MCF 10A (cell line): ENCODE measurements at regions of chr11 and their contacts with region 1.

Region 1: GRCh38 chr11:130069684-130070108 is at the start of gene APLP2:
- DNase-seq: peak; percentile 99
- H3K4me3 Mint-ChIP-seq: peak within 1 kb of the TSS; percentile 85
- H3K27ac Mint-ChIP-seq: peak within 1 kb of the TSS; percentile 92
- H3K4me1 Mint-ChIP-seq: peaks cover 25% of the 10 kb centered on the region
- H3K27me3 Mint-ChIP-seq: no peaks in the 10 kb centered on the region
- CTCF ChIP-seq: no peak
- total RNA-seq, gene APLP2: 317 and 368 TPM in 2 replicates

Region 2: DNA sequence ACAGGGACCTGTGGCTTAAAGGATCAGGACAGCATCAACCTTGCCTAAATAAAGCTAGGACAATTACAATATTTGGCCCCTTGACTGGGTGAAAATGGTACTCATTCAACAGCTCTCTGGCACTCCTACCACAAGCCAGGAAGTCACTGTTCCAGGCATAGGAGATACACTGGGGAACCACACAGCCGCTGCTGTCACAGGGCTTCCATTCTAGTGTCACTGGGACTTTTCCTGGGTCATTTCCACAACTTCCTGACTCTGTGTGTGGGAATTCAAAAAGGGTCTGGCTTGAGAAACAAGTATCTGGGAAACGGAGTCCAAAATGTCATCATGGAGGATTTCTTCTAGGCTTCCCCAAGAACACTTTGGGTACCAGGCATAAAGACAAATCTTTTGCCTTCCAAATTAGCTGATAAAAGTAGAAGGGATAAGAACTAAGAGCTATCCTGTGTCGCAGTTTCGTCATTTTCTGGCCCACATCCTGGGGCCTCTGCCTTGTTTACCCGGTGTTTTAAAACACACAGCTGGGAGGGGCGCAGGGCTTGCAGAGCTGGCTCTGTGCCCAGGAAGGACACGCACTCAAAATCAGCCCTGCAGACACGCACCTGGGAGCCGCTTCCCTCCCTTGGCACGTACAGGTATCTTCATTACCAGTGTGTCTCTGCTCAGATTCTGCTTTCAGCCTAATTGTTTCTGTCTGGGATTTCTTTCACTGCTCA is 216.0 kb before region 1 on chr11:
- CTCF ChIA-PET with region 1: no interaction called
- POLR2A ChIA-PET with region 1: no interaction called
- intact Hi-C with region 1: no loop called
- DNase-seq: peak; percentile 91
- H3K4me3 Mint-ChIP-seq: peak overlapping the region; percentile 2
- H3K27ac Mint-ChIP-seq: peak overlapping the region; percentile 80
- H3K4me1 Mint-ChIP-seq: peaks cover 37% of the 10 kb centered on the region
- H3K27me3 Mint-ChIP-seq: no peaks in the 10 kb centered on the region
- CTCF ChIP-seq: no peak

Region 3: GRCh38 chr11:129922674-129923073 is 147.0 kb before region 1 on chr11:
- CTCF ChIA-PET with region 1: interaction called, 3 read pairs
- POLR2A ChIA-PET with region 1: interaction called, 5 read pairs
- intact Hi-C with region 1: loop called (anchors 2 kb)
- DNase-seq: no peak
- H3K4me3 Mint-ChIP-seq: no peak overlapping the region
- H3K27ac Mint-ChIP-seq: no peak overlapping the region
- H3K4me1 Mint-ChIP-seq: peaks cover 5% of the 10 kb centered on the region
- H3K27me3 Mint-ChIP-seq: no peaks in the 10 kb centered on the region
- CTCF ChIP-seq: no peak

Region 4: GRCh38 chr11:130031945-130032344 is 37.8 kb before region 1 on chr11:
- CTCF ChIA-PET with region 1: no interaction called
- POLR2A ChIA-PET with region 1: interaction called, 28 read pairs
- intact Hi-C with region 1: loop called (anchors 1 kb)
- DNase-seq: no peak
- H3K4me3 Mint-ChIP-seq: no peak overlapping the region
- H3K27ac Mint-ChIP-seq: peak overlapping the region; percentile 51
- H3K4me1 Mint-ChIP-seq: peaks cover 11% of the 10 kb centered on the region
- H3K27me3 Mint-ChIP-seq: no peaks in the 10 kb centered on the region
- CTCF ChIP-seq: no peak

Region 5: GRCh38 chr11:130055617-130056016 is 14.1 kb before region 1 on chr11:
- CTCF ChIA-PET with region 1: interaction called, 4 read pairs
- POLR2A ChIA-PET with region 1: interaction called, 25 read pairs
- intact Hi-C with region 1: no loop called
- DNase-seq: peak; percentile 57
- H3K4me3 Mint-ChIP-seq: no peak overlapping the region
- H3K27ac Mint-ChIP-seq: no peak overlapping the region
- H3K4me1 Mint-ChIP-seq: peaks cover 6% of the 10 kb centered on the region
- H3K27me3 Mint-ChIP-seq: no peaks in the 10 kb centered on the region
- CTCF ChIP-seq: no peak

Region 6: DNA sequence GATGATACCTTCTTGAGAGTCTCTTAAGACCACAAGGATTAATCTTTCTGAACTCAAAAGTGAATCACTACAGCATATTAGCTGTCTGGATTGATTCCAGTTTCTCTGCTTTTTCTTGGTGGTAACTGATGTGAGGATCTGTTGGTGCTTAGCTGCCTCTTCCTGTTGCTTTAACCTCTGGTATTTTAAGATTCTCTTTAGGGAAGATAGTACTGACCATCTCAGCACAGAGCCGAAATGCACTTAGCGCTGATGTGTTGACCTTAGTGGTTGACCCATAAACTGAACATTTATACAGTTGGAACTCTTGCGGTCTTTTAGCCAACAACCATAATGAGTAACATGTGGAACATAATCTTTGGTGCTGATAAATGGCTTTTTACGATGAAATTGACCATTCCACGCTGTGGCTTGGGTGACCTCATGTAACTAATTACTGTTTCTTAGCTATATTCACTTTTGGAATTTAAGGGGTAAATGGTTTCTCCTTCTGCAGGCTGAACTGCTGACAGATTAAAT is 33.7 kb after region 1 on chr11:
- CTCF ChIA-PET with region 1: interaction called, 5 read pairs
- POLR2A ChIA-PET with region 1: interaction called, 69 read pairs
- intact Hi-C with region 1: no loop called
- DNase-seq: peak; percentile 61
- H3K4me3 Mint-ChIP-seq: peak overlapping the region; percentile 43
- H3K27ac Mint-ChIP-seq: peak overlapping the region; percentile 65
- H3K4me1 Mint-ChIP-seq: peaks cover 34% of the 10 kb centered on the region
- H3K27me3 Mint-ChIP-seq: no peaks in the 10 kb centered on the region
- CTCF ChIP-seq: no peak

Region 7: DNA sequence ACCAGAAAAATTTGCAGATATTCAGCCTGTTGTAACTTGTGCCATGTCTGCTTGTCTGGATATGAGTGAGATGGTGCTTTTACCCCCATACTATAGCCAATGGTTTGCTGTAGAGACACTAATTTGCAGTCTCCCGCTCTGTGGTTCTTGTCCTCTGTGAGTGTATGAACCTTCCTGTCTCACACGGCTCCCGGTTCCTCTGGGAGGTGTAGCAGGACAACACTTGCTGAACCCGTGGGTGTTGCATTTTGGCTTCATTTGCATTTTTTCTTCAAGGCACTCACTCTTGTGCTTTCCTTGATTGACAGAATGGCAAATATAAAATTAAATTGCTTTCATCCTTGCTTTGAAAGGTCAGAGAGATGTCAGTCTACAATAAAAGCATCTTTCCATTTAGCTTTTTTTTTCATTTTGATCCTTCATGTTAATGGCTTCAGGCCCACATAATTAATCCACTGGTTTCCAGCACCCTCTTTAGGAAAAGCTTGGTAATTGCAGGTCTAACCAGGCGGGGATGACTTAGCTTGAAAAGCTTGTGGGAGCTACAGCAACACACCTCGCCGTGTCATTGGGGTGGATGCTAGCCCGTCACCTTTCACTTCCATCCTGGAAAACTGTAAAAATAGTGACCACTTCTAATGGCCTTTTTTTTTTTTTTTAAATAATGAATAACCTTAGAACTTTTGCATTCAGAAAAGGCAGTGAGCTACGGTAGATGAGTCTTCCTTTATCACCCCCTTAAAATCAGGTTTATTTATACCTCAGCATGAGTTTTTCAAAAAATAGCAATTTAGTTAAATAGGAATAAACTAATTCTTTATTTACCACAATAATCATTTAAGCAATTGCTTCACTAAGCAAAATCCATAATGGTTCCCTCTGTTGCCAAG is 62.5 kb after region 1 on chr11:
- CTCF ChIA-PET with region 1: interaction called, 7 read pairs
- POLR2A ChIA-PET with region 1: interaction called, 38 read pairs
- intact Hi-C with region 1: no loop called
- DNase-seq: peak; percentile 78
- H3K4me3 Mint-ChIP-seq: no peak overlapping the region
- H3K27ac Mint-ChIP-seq: no peak overlapping the region
- H3K4me1 Mint-ChIP-seq: no peaks in the 10 kb centered on the region
- H3K27me3 Mint-ChIP-seq: no peaks in the 10 kb centered on the region
- CTCF ChIP-seq: peak; percentile 88